B cell (primary cell): ENCODE measurements at regions of chr19 and their contacts with region 1.

Region 1: GRCh38 chr19:49340069-49340864 is 5.1 kb downstream of the CD37 start:
- DNase-seq: peak; percentile 98
- ATAC-seq: peak; percentile 71
- H3K4me3 ChIP-seq: peak overlapping the region in 4 of 5 experiments; percentile 94 to 98 (median 98)
- H3K4me3 Mint-ChIP-seq: peak overlapping the region; percentile 80
- H3K27ac ChIP-seq: peak overlapping the region; percentile 89 to 93
- H3K27ac Mint-ChIP-seq: peak overlapping the region; percentile 95
- H3K4me1 ChIP-seq: peaks cover 52 to 77% of the 10 kb centered on the region in 2 donors
- H3K4me1 Mint-ChIP-seq: peaks cover 75% of the 10 kb centered on the region
- H3K27me3 ChIP-seq: no peaks in the 10 kb centered on the region
- H3K27me3 Mint-ChIP-seq: no peaks in the 10 kb centered on the region
- CTCF ChIP-seq: no peak

Region 2: DNA sequence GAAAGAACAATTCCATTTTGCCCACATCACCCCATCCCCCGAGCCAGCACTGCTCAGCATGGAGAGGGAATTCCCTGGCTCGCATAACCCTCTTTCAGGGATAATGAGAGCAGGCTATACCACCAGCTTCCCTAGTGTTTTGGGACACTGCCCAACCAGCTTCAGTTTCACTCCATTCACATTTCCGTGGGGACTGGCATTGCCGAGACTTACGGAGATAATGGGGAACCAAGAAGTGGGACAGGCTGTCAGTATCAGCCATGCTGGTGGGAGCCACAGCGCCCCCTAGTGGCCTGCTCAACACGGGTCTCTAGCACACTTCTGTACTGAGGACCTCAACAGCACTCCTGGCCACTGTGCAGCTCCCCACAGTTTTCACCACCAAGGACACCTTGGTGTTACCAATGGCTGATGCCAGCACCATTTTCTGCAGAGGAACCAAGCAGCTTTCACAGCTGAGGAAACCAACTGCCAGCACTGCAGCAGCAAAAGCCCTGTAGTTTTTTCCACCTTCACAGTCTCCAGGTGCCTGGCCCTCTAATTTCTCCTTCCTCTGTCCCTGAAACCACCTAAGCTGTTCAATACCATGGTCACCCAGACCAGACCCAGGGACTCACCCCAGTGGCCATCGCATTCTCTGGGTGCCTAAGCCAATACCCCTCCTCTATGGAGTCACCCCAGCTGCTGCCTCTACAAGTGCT is 39.0 kb before region 1 on chr19:
- CTCF ChIA-PET with region 1: interaction called, 39 read pairs
- POLR2A ChIA-PET with region 1: interaction called, 26 read pairs
- intact Hi-C with region 1: loop called (anchors 2 kb)
- DNase-seq: peak; percentile 89
- ATAC-seq: peak; percentile 98
- H3K4me3 ChIP-seq: peak overlapping the region in 4 of 5 experiments; percentile 11 to 51 (median 37)
- H3K4me3 Mint-ChIP-seq: peak overlapping the region; percentile 66
- H3K27ac ChIP-seq: no peak overlapping the region
- H3K27ac Mint-ChIP-seq: peak overlapping the region; percentile 20
- H3K4me1 ChIP-seq: peaks cover 10 to 14% of the 10 kb centered on the region in 2 donors
- H3K4me1 Mint-ChIP-seq: peaks cover 24% of the 10 kb centered on the region
- H3K27me3 ChIP-seq: no peaks in the 10 kb centered on the region
- H3K27me3 Mint-ChIP-seq: no peaks in the 10 kb centered on the region
- CTCF ChIP-seq: peak; percentile 90

Region 3: GRCh38 chr19:49355909-49356353 is 15.7 kb after region 1 on chr19:
- CTCF ChIA-PET with region 1: interaction called, 6 read pairs
- POLR2A ChIA-PET with region 1: interaction called, 33 read pairs
- intact Hi-C with region 1: no loop called
- DNase-seq: no peak
- ATAC-seq: peak; percentile 11
- H3K4me3 ChIP-seq: peak overlapping the region in 3 of 5 experiments; percentile 31 to 54 (median 47)
- H3K4me3 Mint-ChIP-seq: peak overlapping the region; percentile 74
- H3K27ac ChIP-seq: peak overlapping the region in 1 of 2 donors; percentile 29
- H3K27ac Mint-ChIP-seq: peak overlapping the region; percentile 89
- H3K4me1 ChIP-seq: peaks cover 41 to 60% of the 10 kb centered on the region in 2 donors
- H3K4me1 Mint-ChIP-seq: peaks cover 67% of the 10 kb centered on the region
- H3K27me3 ChIP-seq: no peaks in the 10 kb centered on the region
- H3K27me3 Mint-ChIP-seq: no peaks in the 10 kb centered on the region
- CTCF ChIP-seq: no peak

Region 4: GRCh38 chr19:49374665-49375434 is 34.6 kb after region 1 on chr19:
- CTCF ChIA-PET with region 1: interaction called, 4 read pairs
- POLR2A ChIA-PET with region 1: interaction called, 11 read pairs
- intact Hi-C with region 1: no loop called
- DNase-seq: no peak
- ATAC-seq: no peak
- H3K4me3 ChIP-seq: no peak overlapping the region
- H3K4me3 Mint-ChIP-seq: no peak overlapping the region
- H3K27ac ChIP-seq: no peak overlapping the region
- H3K27ac Mint-ChIP-seq: no peak overlapping the region
- H3K4me1 ChIP-seq: no peaks in the 10 kb centered on the region
- H3K4me1 Mint-ChIP-seq: no peaks in the 10 kb centered on the region
- H3K27me3 ChIP-seq: no peaks in the 10 kb centered on the region
- H3K27me3 Mint-ChIP-seq: no peaks in the 10 kb centered on the region
- CTCF ChIP-seq: no peak

Region 5: GRCh38 chr19:49451430-49452181 is 111.3 kb after region 1 on chr19 and contains the start of gene PIH1D1:
- CTCF ChIA-PET with region 1: interaction called, 3 read pairs
- POLR2A ChIA-PET with region 1: interaction called, 13 read pairs
- intact Hi-C with region 1: no loop called
- DNase-seq: peak; percentile 98
- ATAC-seq: peak; percentile 57
- H3K4me3 ChIP-seq: peak within 1 kb of the TSS; percentile 87 to 100 (median 99)
- H3K4me3 Mint-ChIP-seq: peak within 1 kb of the TSS; percentile 99
- H3K27ac ChIP-seq: peak within 1 kb of the TSS; percentile 99
- H3K27ac Mint-ChIP-seq: peak within 1 kb of the TSS; percentile 100
- H3K4me1 ChIP-seq: peaks cover 23 to 36% of the 10 kb centered on the region in 2 donors
- H3K4me1 Mint-ChIP-seq: peaks cover 46% of the 10 kb centered on the region
- H3K27me3 ChIP-seq: no peaks in the 10 kb centered on the region
- H3K27me3 Mint-ChIP-seq: no peaks in the 10 kb centered on the region
- CTCF ChIP-seq: no peak
- total RNA-seq, gene PIH1D1: 168 and 184 TPM in 2 replicates

Region 6: GRCh38 chr19:49473868-49474544 is 133.7 kb after region 1 on chr19 and contains the start of gene FLT3LG:
- CTCF ChIA-PET with region 1: interaction called, 8 read pairs
- POLR2A ChIA-PET with region 1: interaction called, 17 read pairs
- intact Hi-C with region 1: loop called (anchors 1 kb)
- DNase-seq: peak; percentile 94
- ATAC-seq: peak; percentile 52
- H3K4me3 ChIP-seq: peak within 1 kb of the TSS in 4 of 5 experiments; percentile 53 to 98 (median 70)
- H3K4me3 Mint-ChIP-seq: peak within 1 kb of the TSS; percentile 93
- H3K27ac ChIP-seq: peak within 1 kb of the TSS; percentile 75 to 81
- H3K27ac Mint-ChIP-seq: peak within 1 kb of the TSS; percentile 97
- H3K4me1 ChIP-seq: peaks cover 43 to 73% of the 10 kb centered on the region in 2 donors
- H3K4me1 Mint-ChIP-seq: peaks cover 57% of the 10 kb centered on the region
- H3K27me3 ChIP-seq: no peaks in the 10 kb centered on the region
- H3K27me3 Mint-ChIP-seq: no peaks in the 10 kb centered on the region
- CTCF ChIP-seq: peak; percentile 89
- total RNA-seq, gene FLT3LG: 27.8 and 31.0 TPM in 2 replicates